ENCODE measurements at regions of chr4 and their contacts with region 1.

Region 1: GRCh38 chr4:102620697-102621497 is 119.7 kb downstream of the NFKB1 start:
- DNase-seq: no peak
- H3K4me3 Mint-ChIP-seq: no peak overlapping the region
- H3K27ac Mint-ChIP-seq: peak overlapping the region; percentile 76
- H3K4me1 Mint-ChIP-seq: peaks cover 49% of the 10 kb centered on the region
- H3K27me3 Mint-ChIP-seq: no peaks in the 10 kb centered on the region

Region 2: DNA sequence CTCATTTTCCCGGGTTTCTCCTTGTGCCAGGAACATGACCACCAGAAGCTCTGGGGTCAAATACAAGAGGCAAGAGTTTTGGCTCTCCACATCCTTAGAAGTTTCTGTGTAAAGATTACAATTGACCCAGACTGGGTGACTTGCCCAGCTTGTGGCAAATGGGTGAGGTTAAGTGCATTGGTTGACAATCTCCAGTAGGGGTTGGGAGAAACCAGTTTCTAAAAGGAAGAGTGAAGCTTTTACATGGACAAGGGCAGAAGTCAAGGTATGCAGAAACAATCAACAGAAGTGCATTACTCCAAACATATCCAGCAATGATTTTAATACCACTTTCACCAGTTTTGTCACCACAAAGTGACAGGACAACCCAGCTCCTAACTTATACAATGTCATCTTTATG is 365.4 kb before region 1 on chr4:
- CTCF ChIA-PET with region 1: no interaction called
- POLR2A ChIA-PET with region 1: no interaction called
- intact Hi-C with region 1: loop called (anchors 5 kb)
- DNase-seq: no peak
- H3K4me3 Mint-ChIP-seq: no peak overlapping the region
- H3K27ac Mint-ChIP-seq: no peak overlapping the region
- H3K4me1 Mint-ChIP-seq: no peaks in the 10 kb centered on the region
- H3K27me3 Mint-ChIP-seq: no peaks in the 10 kb centered on the region

Region 3: DNA sequence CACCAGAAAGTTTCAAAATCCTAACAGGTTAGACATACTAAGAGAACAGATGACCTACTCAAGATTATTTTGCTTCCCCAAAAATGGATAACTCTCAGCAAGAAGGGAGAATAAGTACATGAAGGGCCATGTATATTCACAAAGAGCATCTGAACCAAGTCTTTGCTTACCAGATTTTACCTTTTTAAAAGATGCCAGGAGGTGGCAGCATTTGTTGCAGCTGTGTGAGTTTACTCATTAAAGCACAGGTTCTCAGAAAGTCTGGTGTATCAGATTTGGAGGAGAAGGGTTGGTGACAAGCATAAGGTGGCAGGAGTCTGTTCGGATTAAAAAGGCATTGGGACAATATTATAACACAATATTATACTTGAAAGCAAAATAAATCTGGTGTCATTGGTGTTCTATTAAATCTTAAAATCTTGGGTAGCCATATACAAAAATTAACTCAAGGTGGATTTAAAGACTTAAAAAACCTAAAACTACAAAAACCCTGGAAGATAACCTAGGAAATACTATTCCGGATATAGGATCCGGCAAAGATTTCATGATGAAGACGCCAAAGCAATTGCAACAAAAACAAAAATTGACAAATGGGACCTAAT is 171.0 kb before region 1 on chr4:
- CTCF ChIA-PET with region 1: interaction called, 13 read pairs
- POLR2A ChIA-PET with region 1: no interaction called
- intact Hi-C with region 1: loop called (anchors 1 kb)
- DNase-seq: peak; percentile 61
- H3K4me3 Mint-ChIP-seq: no peak overlapping the region
- H3K27ac Mint-ChIP-seq: peak overlapping the region; percentile 4
- H3K4me1 Mint-ChIP-seq: peaks cover 43% of the 10 kb centered on the region
- H3K27me3 Mint-ChIP-seq: no peaks in the 10 kb centered on the region

Region 4: GRCh38 chr4:102760645-102761295 is 139.9 kb after region 1 on chr4 and contains the start of gene MANBA:
- CTCF ChIA-PET with region 1: interaction called, 8 read pairs
- POLR2A ChIA-PET with region 1: no interaction called
- intact Hi-C with region 1: loop called (anchors 5 kb)
- DNase-seq: peak; percentile 91
- H3K4me3 Mint-ChIP-seq: peak within 1 kb of the TSS; percentile 97
- H3K27ac Mint-ChIP-seq: peak within 1 kb of the TSS; percentile 82
- H3K4me1 Mint-ChIP-seq: peaks cover 36% of the 10 kb centered on the region
- H3K27me3 Mint-ChIP-seq: no peaks in the 10 kb centered on the region
- total RNA-seq, gene MANBA: 10.2 to 10.7 TPM

Region 5: GRCh38 chr4:103091601-103092223 is 470.8 kb after region 1 on chr4:
- CTCF ChIA-PET with region 1: interaction called, 7 read pairs
- POLR2A ChIA-PET with region 1: no interaction called
- intact Hi-C with region 1: loop called (anchors 2 kb)
- DNase-seq: peak; percentile 36
- H3K4me3 Mint-ChIP-seq: no peak overlapping the region
- H3K27ac Mint-ChIP-seq: no peak overlapping the region
- H3K4me1 Mint-ChIP-seq: peaks cover 14% of the 10 kb centered on the region
- H3K27me3 Mint-ChIP-seq: no peaks in the 10 kb centered on the region